Thyroid gland (tissue), 4 donors: ENCODE measurements at regions of chr11 and their contacts with region 1.

Region 1: GRCh38 chr11:6603287-6604080 is at the starts of genes ILK and RRP8:
- DNase-seq: peak; percentile 92 to 94
- H3K4me3 ChIP-seq: peak within 1 kb of the TSS; percentile 78 to 91 (median 89)
- H3K27ac ChIP-seq: peak within 1 kb of the TSS; percentile 85 to 92 (median 91)
- H3K4me1 ChIP-seq: peaks cover 32 to 47% of the 10 kb centered on the region in 2 donors
- H3K27me3 ChIP-seq: no peaks in the 10 kb centered on the region
- CTCF ChIP-seq: peak in 3 of 6 experiments; percentile 14 to 36 (median 31)
- POLR2A ChIP-seq: peak; percentile 33 to 83
- total RNA-seq, gene ILK: 101 to 144 (median 121) TPM
- total RNA-seq, gene RRP8: 12.9 to 36.7 (median 18.8) TPM

Region 2: DNA sequence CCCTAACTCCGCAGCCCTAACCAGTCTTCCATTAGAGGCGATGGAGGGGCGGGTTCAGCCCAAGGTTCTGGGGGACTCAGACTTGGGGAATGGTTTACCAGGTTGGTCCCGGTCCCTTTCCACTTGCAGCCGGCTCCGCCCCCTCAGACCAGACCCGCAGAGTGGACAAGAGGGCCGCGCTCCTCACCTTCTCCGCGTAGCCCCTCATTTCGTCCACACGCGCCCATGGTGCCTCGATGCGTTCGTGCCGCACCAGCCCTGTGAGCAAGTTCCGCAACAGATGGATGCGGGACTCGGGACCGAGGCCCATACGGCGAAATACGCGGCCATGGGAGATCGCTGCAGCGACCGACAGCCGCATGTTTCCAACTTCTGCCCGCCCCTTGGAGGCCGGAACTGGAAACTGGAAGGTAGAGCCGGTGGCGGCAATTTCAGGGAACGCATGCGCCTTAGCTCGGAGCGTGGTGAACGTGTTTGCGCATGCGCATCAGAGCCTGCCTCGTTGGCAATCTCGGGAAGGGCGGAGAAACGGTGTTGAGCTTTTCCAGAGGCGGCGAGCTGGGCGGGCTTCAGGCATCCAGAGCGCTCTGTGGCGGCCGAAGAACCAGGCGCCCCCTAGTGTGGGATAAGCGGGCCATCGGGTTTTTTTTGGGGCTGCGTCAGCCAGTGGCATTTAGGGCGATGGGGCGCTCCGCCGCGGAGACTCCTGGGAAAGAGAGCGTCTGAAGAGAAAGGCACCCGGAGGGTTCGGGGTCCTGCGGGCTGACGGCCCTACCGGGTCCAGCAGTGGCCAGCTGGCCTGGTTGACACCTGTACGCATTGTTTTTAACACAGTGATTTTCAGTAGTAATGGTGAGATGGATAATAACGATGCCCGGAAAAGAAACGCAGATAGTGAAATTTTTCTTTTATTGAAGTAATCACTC is 79.7 kb after region 1 on chr11 and contains the start of gene MRPL17:
- intact Hi-C with region 1: loop called (anchors 5 kb)
- DNase-seq: peak; percentile 99
- H3K4me3 ChIP-seq: peak within 1 kb of the TSS; percentile 29 to 85 (median 84)
- H3K27ac ChIP-seq: peak within 1 kb of the TSS; percentile 80 to 90 (median 86)
- H3K4me1 ChIP-seq: peaks cover 5 to 11% of the 10 kb centered on the region in 2 donors
- H3K27me3 ChIP-seq: no peaks in the 10 kb centered on the region
- CTCF ChIP-seq: peak; percentile 77 to 97 (median 88)
- POLR2A ChIP-seq: peak; percentile 31 to 79
- total RNA-seq, gene MRPL17: 37.8 to 579 (median 144) TPM

Region 3: DNA sequence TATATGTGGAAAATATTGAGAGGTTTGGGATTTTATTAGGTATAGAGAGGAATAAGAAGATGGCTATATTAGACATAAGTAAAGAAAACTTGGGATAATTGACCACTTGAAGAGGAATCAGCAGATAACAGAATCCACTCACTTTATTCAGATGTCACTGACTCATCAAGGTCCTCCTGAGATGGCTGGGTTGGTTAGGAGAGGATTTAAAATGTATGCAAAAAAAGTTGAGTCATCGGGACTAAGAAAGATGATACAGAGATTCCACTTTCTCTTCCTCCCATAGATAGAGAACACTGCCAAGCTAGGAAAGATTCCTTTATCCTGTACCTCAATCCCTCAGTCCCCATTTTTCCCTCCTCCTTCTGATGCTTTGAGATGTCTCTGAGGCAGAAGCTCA is 195.9 kb after region 1 on chr11 and contains the start of gene OR6A2:
- intact Hi-C with region 1: no loop called
- DNase-seq: no peak
- H3K4me3 ChIP-seq: no peak within 1 kb of the TSS
- H3K27ac ChIP-seq: no peak within 1 kb of the TSS
- H3K4me1 ChIP-seq: no peaks in the 10 kb centered on the region
- H3K27me3 ChIP-seq: no peaks in the 10 kb centered on the region
- CTCF ChIP-seq: no peak
- POLR2A ChIP-seq: no peak
- total RNA-seq, gene OR6A2: 0.27 to 0.92 (median 0.67) TPM